ENCODE measurements at regions of chr14 and their contacts with region 1.

Region 1: GRCh38 chr14:37048666-37049071 is 123.7 kb downstream of the SLC25A21 start:
- DNase-seq: no peak
- H3K4me3 ChIP-seq: no peak overlapping the region
- H3K27ac ChIP-seq: no peak overlapping the region
- H3K4me1 ChIP-seq: no peaks in the 10 kb centered on the region
- H3K27me3 ChIP-seq: no peaks in the 10 kb centered on the region
- CTCF ChIP-seq: no peak
- EP300 ChIP-seq: no peak
- POLR2A ChIP-seq: no peak

Region 2: DNA sequence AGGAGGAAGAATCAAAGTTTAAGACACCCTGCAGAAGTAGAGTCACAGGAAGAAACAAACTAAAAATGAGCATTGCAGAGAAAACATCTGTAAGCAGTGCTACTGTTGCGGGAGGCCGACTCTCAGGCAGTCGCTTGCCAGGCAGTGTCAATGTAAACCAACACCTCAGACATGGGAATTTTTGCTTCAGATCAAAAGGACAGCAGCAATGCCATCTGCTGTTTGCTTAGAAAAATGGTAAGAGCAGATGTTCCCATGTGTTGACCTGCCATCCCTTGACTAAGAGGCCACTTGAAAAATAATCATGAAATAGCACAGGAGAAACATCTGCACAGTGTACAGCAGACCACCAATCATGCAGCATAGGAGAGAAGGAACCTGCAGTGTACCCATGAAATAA is 72.8 kb before region 1 on chr14:
- in situ Hi-C with region 1: no loop called
- intact Hi-C with region 1: no loop called
- DNase-seq: no peak
- H3K4me3 ChIP-seq: no peak overlapping the region
- H3K27ac ChIP-seq: no peak overlapping the region
- H3K4me1 ChIP-seq: no peaks in the 10 kb centered on the region
- H3K27me3 ChIP-seq: no peaks in the 10 kb centered on the region
- CTCF ChIP-seq: no peak
- EP300 ChIP-seq: no peak
- POLR2A ChIP-seq: no peak

Region 3: GRCh38 chr14:37063467-37064240 is 15.0 kb after region 1 on chr14:
- in situ Hi-C with region 1: no loop called
- intact Hi-C with region 1: loop called (anchors 1 kb)
- DNase-seq: no peak
- H3K4me3 ChIP-seq: no peak overlapping the region
- H3K27ac ChIP-seq: no peak overlapping the region
- H3K4me1 ChIP-seq: no peaks in the 10 kb centered on the region
- H3K27me3 ChIP-seq: no peaks in the 10 kb centered on the region
- CTCF ChIP-seq: no peak
- EP300 ChIP-seq: no peak
- POLR2A ChIP-seq: no peak